ENCODE measurements at regions of chr17 and their contacts with region 1.

Region 1: GRCh38 chr17:45148183-45149036 is at the start of gene HEXIM1:
- DNase-seq: peak; percentile 95 to 100 (median 97)
- ATAC-seq: peak; percentile 77
- H3K4me3 ChIP-seq: peak within 1 kb of the TSS; percentile 69
- H3K27ac ChIP-seq: peak within 1 kb of the TSS; percentile 97
- H3K4me1 ChIP-seq: peaks cover 39 to 48% of the 10 kb centered on the region in 2 experiments
- H3K27me3 ChIP-seq: no peaks in the 10 kb centered on the region
- CTCF ChIP-seq: peak in 2 of 3 experiments; percentile 0 to 2; a peak in 1 of 6 replicates
- EP300 ChIP-seq: no peak
- POLR2A ChIP-seq: peak; percentile 100
- RAD21 ChIP-seq: 0 out of 4 replicates have a peak, but pooled peaks of 1 of the 2 experiments have one; percentile 10
- polyA plus RNA-seq, gene HEXIM1: 1.4 to 1.6 TPM

Region 2: GRCh38 chr17:45060797-45061605 is 87.4 kb before region 1 on chr17 and contains the start of gene NMT1:
- CTCF ChIA-PET with region 1: no interaction called
- POLR2A ChIA-PET with region 1: interaction called, 17 read pairs
- in situ Hi-C with region 1: no loop called
- intact Hi-C with region 1: no loop called
- DNase-seq: peak; percentile 92 to 99 (median 96)
- ATAC-seq: peak; percentile 93
- H3K4me3 ChIP-seq: peak within 1 kb of the TSS; percentile 67
- H3K27ac ChIP-seq: peak within 1 kb of the TSS; percentile 97
- H3K4me1 ChIP-seq: peaks cover 7 to 12% of the 10 kb centered on the region in 2 experiments; a peak in 3 of 5 replicates
- H3K27me3 ChIP-seq: no peaks in the 10 kb centered on the region
- CTCF ChIP-seq: no peak
- EP300 ChIP-seq: no peak
- POLR2A ChIP-seq: peak; percentile 97
- RAD21 ChIP-seq: 0 out of 4 replicates have a peak, but pooled peaks of 1 of the 2 experiments have one; percentile 5
- polyA plus RNA-seq, gene NMT1: 297 to 332 TPM

Region 3: GRCh38 chr17:45123930-45124796 is 24.2 kb before region 1 on chr17:
- CTCF ChIA-PET with region 1: no interaction called
- POLR2A ChIA-PET with region 1: interaction called, 48 read pairs
- in situ Hi-C with region 1: no loop called
- intact Hi-C with region 1: no loop called
- DNase-seq: peak; percentile 77 to 89 (median 86)
- ATAC-seq: peak; percentile 95
- H3K4me3 ChIP-seq: no peak overlapping the region; the same call in 1 of the 2 replicates
- H3K27ac ChIP-seq: peak overlapping the region; percentile 92
- H3K4me1 ChIP-seq: peaks cover 35 to 55% of the 10 kb centered on the region in 2 experiments
- H3K27me3 ChIP-seq: no peaks in the 10 kb centered on the region
- CTCF ChIP-seq: no peak
- EP300 ChIP-seq: peak; percentile 73; the same call in 1 of the 2 replicates
- POLR2A ChIP-seq: peak; percentile 70
- RAD21 ChIP-seq: no peak

Region 4: GRCh38 chr17:45172454-45173286 is 24.3 kb after region 1 on chr17:
- CTCF ChIA-PET with region 1: no interaction called
- POLR2A ChIA-PET with region 1: interaction called, 73 read pairs
- in situ Hi-C with region 1: no loop called
- intact Hi-C with region 1: no loop called
- DNase-seq: no peak
- ATAC-seq: no peak
- H3K4me3 ChIP-seq: no peak overlapping the region
- H3K27ac ChIP-seq: no peak overlapping the region
- H3K4me1 ChIP-seq: peaks cover 2 to 38% of the 10 kb centered on the region in 2 experiments; a peak in 3 of 5 replicates
- H3K27me3 ChIP-seq: no peaks in the 10 kb centered on the region
- CTCF ChIP-seq: no peak
- EP300 ChIP-seq: no peak
- POLR2A ChIP-seq: no peak
- RAD21 ChIP-seq: no peak

Region 5: GRCh38 chr17:45218895-45219661 is 70.7 kb after region 1 on chr17:
- CTCF ChIA-PET with region 1: no interaction called
- POLR2A ChIA-PET with region 1: interaction called, 27 read pairs
- in situ Hi-C with region 1: no loop called
- intact Hi-C with region 1: no loop called
- DNase-seq: peak; percentile 74 to 85 (median 77)
- ATAC-seq: peak; percentile 76
- H3K4me3 ChIP-seq: no peak overlapping the region
- H3K27ac ChIP-seq: no peak overlapping the region
- H3K4me1 ChIP-seq: peaks cover 16 to 33% of the 10 kb centered on the region in 2 experiments; a peak in 4 of 5 replicates
- H3K27me3 ChIP-seq: no peaks in the 10 kb centered on the region
- CTCF ChIP-seq: peak; percentile 92 to 96 (median 96)
- EP300 ChIP-seq: no peak
- POLR2A ChIP-seq: no peak
- RAD21 ChIP-seq: peak; percentile 92 to 98

Region 6: DNA sequence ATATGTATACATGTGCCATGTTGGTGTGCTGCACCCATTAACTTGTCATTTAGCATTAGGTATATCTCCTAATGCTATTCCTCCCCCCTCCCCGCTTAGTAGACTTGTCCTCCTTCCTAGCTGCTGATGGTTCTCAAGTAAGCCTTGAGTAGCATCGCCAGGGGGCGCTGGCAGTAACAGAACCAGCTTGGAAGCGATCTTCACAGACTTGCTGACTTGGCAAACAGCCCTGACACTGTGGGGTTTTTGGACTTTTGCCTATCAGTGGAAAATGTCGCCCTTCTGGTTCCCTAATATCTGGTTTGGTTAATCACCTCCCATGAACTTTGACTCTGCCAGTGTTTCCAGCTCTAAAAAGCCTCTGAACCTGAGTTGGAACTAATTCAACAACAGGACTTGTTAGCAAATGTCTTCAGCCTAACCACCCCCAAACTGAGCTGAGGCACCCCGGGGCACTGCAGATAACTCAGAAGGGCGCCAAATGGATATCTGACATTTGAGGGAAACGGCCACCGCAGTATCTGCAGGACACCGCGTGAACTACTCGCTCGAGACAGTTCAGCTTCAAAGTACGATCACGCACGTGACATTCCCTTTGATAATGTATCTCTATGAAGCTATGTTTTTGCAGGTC is 128.9 kb after region 1 on chr17:
- CTCF ChIA-PET with region 1: no interaction called
- POLR2A ChIA-PET with region 1: interaction called, 16 read pairs
- in situ Hi-C with region 1: no loop called
- intact Hi-C with region 1: no loop called
- DNase-seq: peak; percentile 83 to 98 (median 89)
- ATAC-seq: peak; percentile 99
- H3K4me3 ChIP-seq: no peak overlapping the region
- H3K27ac ChIP-seq: peak overlapping the region; percentile 57
- H3K4me1 ChIP-seq: peaks cover 9 to 12% of the 10 kb centered on the region in 2 experiments; a peak in 3 of 5 replicates
- H3K27me3 ChIP-seq: no peaks in the 10 kb centered on the region
- CTCF ChIP-seq: peak; percentile 87 to 92 (median 89)
- EP300 ChIP-seq: 0 out of 2 replicates have a peak, but pooled peaks have one; percentile 11
- POLR2A ChIP-seq: no peak
- RAD21 ChIP-seq: peak; percentile 95 to 98

Measured in K562 (cell line).